ENCODE measurements at regions of chr12 and their contacts with region 1.

Region 1: GRCh38 chr12:26493656-26494055 is 298.3 kb downstream of the SSPN start:
- DNase-seq: no peak
- ATAC-seq: no peak
- H3K4me3 ChIP-seq: no peak overlapping the region
- H3K27ac ChIP-seq: no peak overlapping the region
- H3K4me1 ChIP-seq: no peaks in the 10 kb centered on the region
- H3K27me3 ChIP-seq: no peaks in the 10 kb centered on the region
- CTCF ChIP-seq: no peak

Region 2: DNA sequence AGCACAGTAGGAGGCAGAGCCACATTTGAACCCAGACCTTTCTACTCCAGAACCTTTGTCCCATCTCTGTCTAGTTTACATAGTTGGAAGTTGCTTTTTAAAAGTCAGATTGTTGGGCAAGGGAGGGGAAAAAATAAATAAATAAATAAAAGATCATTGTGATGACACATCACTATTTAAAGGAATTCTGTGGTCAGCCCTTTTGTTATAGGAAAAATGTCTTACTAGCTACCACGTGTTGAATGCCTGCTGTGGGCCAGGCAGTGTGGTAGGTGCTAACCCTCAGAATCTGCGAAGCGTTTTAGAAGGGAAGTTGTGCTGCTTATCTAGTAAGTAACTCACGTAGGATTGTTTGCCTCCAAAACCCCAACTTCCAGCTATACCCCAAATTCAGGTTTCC is 431.1 kb before region 1 on chr12:
- CTCF ChIA-PET with region 1: interaction called, 11 read pairs
- POLR2A ChIA-PET with region 1: no interaction called
- in situ Hi-C with region 1: no loop called
- intact Hi-C with region 1: no loop called
- DNase-seq: no peak
- ATAC-seq: peak; percentile 66; the same call in 1 of the 2 replicates
- H3K4me3 ChIP-seq: no peak overlapping the region
- H3K27ac ChIP-seq: peak overlapping the region; percentile 65
- H3K4me1 ChIP-seq: peaks cover 16% of the 10 kb centered on the region
- H3K27me3 ChIP-seq: no peaks in the 10 kb centered on the region
- CTCF ChIP-seq: no peak